HepG2 (cell line): ENCODE measurements at regions of chr5 and their contacts with region 1.

Region 1: GRCh38 chr5:38809388-38810359 is 36.1 kb upstream of the OSMR start:
- DNase-seq: peak; percentile 68
- ATAC-seq: peak; percentile 98
- H3K4me3 ChIP-seq: no peak overlapping the region
- H3K27ac ChIP-seq: no peak overlapping the region
- H3K4me1 ChIP-seq: peaks cover 13% of the 10 kb centered on the region
- H3K27me3 ChIP-seq: no peaks in the 10 kb centered on the region
- CTCF ChIP-seq: peak; percentile 88
- EP300 ChIP-seq: no peak
- POLR2A ChIP-seq: no peak
- RAD21 ChIP-seq: peak; percentile 82

Region 2: DNA sequence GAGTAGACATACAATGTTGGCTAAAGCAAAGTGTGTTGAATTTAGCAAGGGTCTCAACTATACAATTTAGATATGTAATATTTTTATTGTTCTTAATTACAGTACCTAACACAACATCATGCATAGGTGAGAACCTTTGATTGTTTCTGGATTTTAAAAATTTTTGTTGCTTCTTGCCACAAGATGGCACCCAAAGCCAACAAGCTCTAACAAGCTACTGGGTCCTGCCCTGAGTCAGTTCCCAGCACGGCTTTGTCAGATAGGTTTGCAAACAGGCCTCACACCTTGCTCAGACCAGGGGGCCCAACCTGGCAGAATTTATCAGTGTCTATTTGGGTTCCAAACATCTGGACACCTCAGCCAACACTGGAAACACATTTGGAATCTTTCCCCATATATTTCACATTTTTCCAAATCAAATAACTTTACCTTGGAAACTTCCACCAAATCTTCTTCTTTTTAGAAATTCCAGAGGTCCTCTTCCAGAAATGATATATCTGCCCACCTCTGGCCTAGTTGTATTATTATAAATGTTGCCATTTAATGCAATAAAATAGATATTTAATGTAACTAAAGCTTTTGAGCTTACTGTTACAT is 600.8 kb before region 1 on chr5:
- CTCF ChIA-PET with region 1: no interaction called
- POLR2A ChIA-PET with region 1: no interaction called
- in situ Hi-C with region 1: no loop called
- intact Hi-C with region 1: loop called (anchors 2 kb)
- DNase-seq: peak; percentile 46
- ATAC-seq: peak; percentile 82
- H3K4me3 ChIP-seq: no peak overlapping the region
- H3K27ac ChIP-seq: no peak overlapping the region
- H3K4me1 ChIP-seq: no peaks in the 10 kb centered on the region
- H3K27me3 ChIP-seq: no peaks in the 10 kb centered on the region; a peak in 1 of 5 replicates
- CTCF ChIP-seq: peak; percentile 77
- EP300 ChIP-seq: no peak
- POLR2A ChIP-seq: no peak
- RAD21 ChIP-seq: peak; percentile 44; the same call in 1 of the 2 replicates

Region 3: GRCh38 chr5:38382898-38383297 is 426.8 kb before region 1 on chr5:
- CTCF ChIA-PET with region 1: interaction called, 13 read pairs
- POLR2A ChIA-PET with region 1: no interaction called
- in situ Hi-C with region 1: no loop called
- intact Hi-C with region 1: loop called (anchors 1 kb)
- DNase-seq: peak; percentile 85
- ATAC-seq: peak; percentile 99
- H3K4me3 ChIP-seq: no peak overlapping the region
- H3K27ac ChIP-seq: no peak overlapping the region
- H3K4me1 ChIP-seq: peaks cover 6% of the 10 kb centered on the region; the same call in 1 of the 2 replicates
- H3K27me3 ChIP-seq: peaks cover 0 to 14% of the 10 kb centered on the region in 2 experiments; a peak in 3 of 5 replicates
- CTCF ChIP-seq: peak; percentile 90
- EP300 ChIP-seq: peak in 1 of 2 experiments; percentile 35; a peak in 1 of 4 replicates
- POLR2A ChIP-seq: no peak
- RAD21 ChIP-seq: peak; percentile 79

Region 4: GRCh38 chr5:38420691-38421390 is 388.8 kb before region 1 on chr5:
- CTCF ChIA-PET with region 1: interaction called, 29 read pairs
- POLR2A ChIA-PET with region 1: no interaction called
- in situ Hi-C with region 1: no loop called
- intact Hi-C with region 1: loop called (anchors 1 kb)
- DNase-seq: peak; percentile 54
- ATAC-seq: peak; percentile 95
- H3K4me3 ChIP-seq: no peak overlapping the region
- H3K27ac ChIP-seq: no peak overlapping the region
- H3K4me1 ChIP-seq: no peaks in the 10 kb centered on the region
- H3K27me3 ChIP-seq: peaks cover 3 to 7% of the 10 kb centered on the region in 2 experiments; a peak in 3 of 5 replicates
- CTCF ChIP-seq: peak; percentile 76
- EP300 ChIP-seq: no peak
- POLR2A ChIP-seq: no peak
- RAD21 ChIP-seq: peak; percentile 43; the same call in 1 of the 2 replicates

Region 5: DNA sequence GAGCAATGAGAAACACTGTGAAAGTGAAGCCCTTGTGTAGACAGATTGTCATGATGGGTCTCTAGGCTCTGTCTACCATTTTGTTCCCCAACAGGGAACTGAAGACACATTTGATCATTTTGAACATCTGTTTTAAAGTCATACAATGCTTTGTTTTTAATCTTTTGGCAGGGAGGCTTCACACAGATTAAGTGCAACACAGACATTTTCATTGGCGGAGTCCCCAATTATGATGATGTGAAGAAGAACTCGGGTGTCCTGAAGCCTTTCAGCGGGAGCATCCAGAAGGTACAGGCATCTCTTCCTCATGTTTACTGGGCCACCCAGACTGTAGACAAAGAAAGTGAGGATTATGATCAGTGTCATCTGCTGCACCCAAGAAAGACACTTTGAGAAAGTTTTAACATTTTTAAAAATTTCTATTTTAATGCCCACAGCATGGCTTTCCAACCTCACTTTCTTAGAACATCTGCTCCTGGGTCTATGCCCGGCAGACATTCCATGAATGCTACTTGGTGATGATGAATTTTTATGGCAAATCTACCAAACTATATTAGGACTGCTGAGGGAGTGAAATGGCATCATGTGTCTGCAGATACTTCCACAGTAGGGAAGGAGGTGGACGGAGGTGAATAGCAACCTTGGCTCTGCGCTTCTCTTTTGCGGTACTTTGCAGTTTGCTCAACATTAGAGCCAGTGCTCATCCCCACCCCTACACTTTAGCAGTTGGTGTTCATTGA is 374.5 kb before region 1 on chr5:
- CTCF ChIA-PET with region 1: no interaction called
- POLR2A ChIA-PET with region 1: no interaction called
- in situ Hi-C with region 1: loop called (anchors 5 kb)
- intact Hi-C with region 1: no loop called
- DNase-seq: no peak
- ATAC-seq: no peak
- H3K4me3 ChIP-seq: no peak overlapping the region
- H3K27ac ChIP-seq: no peak overlapping the region
- H3K4me1 ChIP-seq: 0 out of 2 replicates have a peak, but pooled peaks cover 6% of the 10 kb centered on the region
- H3K27me3 ChIP-seq: peaks cover 0 to 20% of the 10 kb centered on the region in 2 experiments; a peak in 3 of 5 replicates
- CTCF ChIP-seq: no peak
- EP300 ChIP-seq: no peak
- POLR2A ChIP-seq: no peak
- RAD21 ChIP-seq: no peak

Region 6: GRCh38 chr5:38551030-38552017 is 258.4 kb before region 1 on chr5:
- CTCF ChIA-PET with region 1: no interaction called
- POLR2A ChIA-PET with region 1: no interaction called
- in situ Hi-C with region 1: no loop called
- intact Hi-C with region 1: loop called (anchors 5 kb)
- DNase-seq: peak; percentile 59
- ATAC-seq: peak; percentile 56
- H3K4me3 ChIP-seq: peak overlapping the region in 1 of 3 experiments; percentile 19; a peak in 1 of 6 replicates
- H3K27ac ChIP-seq: peak overlapping the region; percentile 94
- H3K4me1 ChIP-seq: peaks cover 79% of the 10 kb centered on the region
- H3K27me3 ChIP-seq: no peaks in the 10 kb centered on the region; a peak in 1 of 5 replicates
- CTCF ChIP-seq: peak; percentile 78
- EP300 ChIP-seq: no peak
- POLR2A ChIP-seq: no peak
- RAD21 ChIP-seq: peak; percentile 64; the same call in 1 of the 2 replicates

Region 7: GRCh38 chr5:38666668-38667498 is 142.8 kb before region 1 on chr5:
- CTCF ChIA-PET with region 1: interaction called, 3 read pairs
- POLR2A ChIA-PET with region 1: no interaction called
- in situ Hi-C with region 1: loop called (anchors 5 kb)
- intact Hi-C with region 1: loop called (anchors 5 kb)
- DNase-seq: peak; percentile 25
- ATAC-seq: peak; percentile 98
- H3K4me3 ChIP-seq: no peak overlapping the region
- H3K27ac ChIP-seq: no peak overlapping the region
- H3K4me1 ChIP-seq: peaks cover 7% of the 10 kb centered on the region
- H3K27me3 ChIP-seq: no peaks in the 10 kb centered on the region; a peak in 2 of 5 replicates
- CTCF ChIP-seq: peak; percentile 73
- EP300 ChIP-seq: no peak
- POLR2A ChIP-seq: no peak
- RAD21 ChIP-seq: peak; percentile 60; the same call in 1 of the 2 replicates

Region 8: GRCh38 chr5:38680094-38680825 is 129.4 kb before region 1 on chr5:
- CTCF ChIA-PET with region 1: no interaction called
- POLR2A ChIA-PET with region 1: no interaction called
- in situ Hi-C with region 1: no loop called
- intact Hi-C with region 1: no loop called
- DNase-seq: no peak
- ATAC-seq: no peak
- H3K4me3 ChIP-seq: no peak overlapping the region
- H3K27ac ChIP-seq: no peak overlapping the region
- H3K4me1 ChIP-seq: no peaks in the 10 kb centered on the region
- H3K27me3 ChIP-seq: peaks cover 0 to 6% of the 10 kb centered on the region in 2 experiments; a peak in 2 of 5 replicates
- CTCF ChIP-seq: no peak
- EP300 ChIP-seq: no peak
- POLR2A ChIP-seq: no peak
- RAD21 ChIP-seq: no peak